ENCODE measurements at regions of chr6 and their contacts with region 1.

Region 1: DNA sequence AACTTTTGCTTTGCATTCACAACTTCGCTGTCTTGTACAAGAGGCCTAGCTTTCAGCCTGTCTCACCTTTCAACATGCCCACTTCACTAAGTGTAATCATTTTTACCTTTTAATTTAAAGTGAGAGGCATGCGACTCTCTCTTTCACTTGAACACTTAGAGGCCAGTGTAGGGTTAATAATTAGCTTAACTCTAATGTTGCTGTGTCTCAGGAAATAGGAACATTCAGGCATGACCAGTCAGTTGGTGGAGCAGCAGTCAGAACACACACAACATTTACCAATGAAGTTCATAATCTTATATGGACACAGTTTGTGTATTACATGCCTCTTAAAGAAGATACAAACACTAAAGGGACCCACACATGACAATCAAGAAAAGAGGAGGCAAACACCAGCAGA is 47.6 kb downstream of the HTR1B start:
- DNase-seq: no peak
- H3K4me3 ChIP-seq: no peak overlapping the region
- H3K27ac ChIP-seq: no peak overlapping the region
- H3K4me1 ChIP-seq: no peaks in the 10 kb centered on the region
- H3K27me3 ChIP-seq: no peaks in the 10 kb centered on the region
- CTCF ChIP-seq: no peak
- POLR2A ChIP-seq: no peak

Region 2: DNA sequence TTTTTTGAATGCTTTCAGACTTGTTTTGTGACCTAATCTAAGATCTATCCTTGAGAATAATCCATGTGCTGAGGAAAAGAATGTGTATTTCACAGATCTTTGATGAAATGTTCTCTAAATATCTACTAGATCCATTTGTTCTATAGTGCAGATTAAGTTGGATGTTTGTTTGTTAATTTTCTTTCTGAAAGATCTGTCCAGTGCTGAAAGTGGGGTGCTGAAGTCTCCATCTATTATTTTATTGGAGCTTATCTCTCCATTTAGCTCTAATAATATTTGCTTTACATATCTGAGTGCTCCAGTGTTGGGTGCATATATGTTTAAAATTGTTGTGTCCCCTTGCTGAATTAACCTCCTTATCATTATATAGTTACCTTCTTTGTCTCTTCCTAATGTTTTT is 256.0 kb before region 1 on chr6:
- CTCF ChIA-PET with region 1: no interaction called
- POLR2A ChIA-PET with region 1: no interaction called
- dilution Hi-C with region 1: no loop called
- intact Hi-C with region 1: no loop called
- DNase-seq: no peak
- H3K4me3 ChIP-seq: no peak overlapping the region
- H3K27ac ChIP-seq: no peak overlapping the region
- H3K4me1 ChIP-seq: no peaks in the 10 kb centered on the region
- H3K27me3 ChIP-seq: no peaks in the 10 kb centered on the region
- CTCF ChIP-seq: no peak
- POLR2A ChIP-seq: no peak

Region 3: GRCh38 chr6:77397561-77397960 is 18.1 kb before region 1 on chr6:
- CTCF ChIA-PET with region 1: interaction called, 11 read pairs
- POLR2A ChIA-PET with region 1: no interaction called
- dilution Hi-C with region 1: no loop called
- intact Hi-C with region 1: no loop called
- DNase-seq: no peak
- H3K4me3 ChIP-seq: no peak overlapping the region
- H3K27ac ChIP-seq: no peak overlapping the region
- H3K4me1 ChIP-seq: no peaks in the 10 kb centered on the region
- H3K27me3 ChIP-seq: no peaks in the 10 kb centered on the region
- CTCF ChIP-seq: no peak
- POLR2A ChIP-seq: no peak

Measured in endothelial cell of umbilical vein (primary cell).